ENCODE measurements at regions of chr4 and their contacts with region 1.

Region 1: DNA sequence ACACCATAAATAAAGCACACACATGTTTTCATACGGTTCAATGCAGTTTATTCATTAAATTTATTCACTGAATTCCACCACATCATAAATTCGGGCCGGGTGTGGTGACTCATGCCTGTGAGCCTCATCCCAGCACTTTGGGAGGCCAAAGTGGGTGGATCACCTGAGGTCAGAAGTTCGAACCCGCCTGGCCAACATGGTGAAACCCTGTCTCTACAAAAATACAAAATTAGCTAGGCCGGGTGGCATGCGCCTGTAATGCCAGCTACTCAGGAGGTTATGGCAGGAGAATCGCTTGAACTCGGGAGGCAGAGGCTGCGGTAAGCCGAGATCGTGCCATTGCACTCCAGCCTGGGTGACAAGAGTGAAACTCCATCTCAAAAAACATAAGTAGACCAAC is 131.6 kb downstream of the PDS5A start:
- H3K4me3 Mint-ChIP-seq: no peak overlapping the region
- H3K27ac Mint-ChIP-seq: no peak overlapping the region
- H3K4me1 Mint-ChIP-seq: no peaks in the 10 kb centered on the region
- H3K27me3 Mint-ChIP-seq: no peaks in the 10 kb centered on the region

Region 2: DNA sequence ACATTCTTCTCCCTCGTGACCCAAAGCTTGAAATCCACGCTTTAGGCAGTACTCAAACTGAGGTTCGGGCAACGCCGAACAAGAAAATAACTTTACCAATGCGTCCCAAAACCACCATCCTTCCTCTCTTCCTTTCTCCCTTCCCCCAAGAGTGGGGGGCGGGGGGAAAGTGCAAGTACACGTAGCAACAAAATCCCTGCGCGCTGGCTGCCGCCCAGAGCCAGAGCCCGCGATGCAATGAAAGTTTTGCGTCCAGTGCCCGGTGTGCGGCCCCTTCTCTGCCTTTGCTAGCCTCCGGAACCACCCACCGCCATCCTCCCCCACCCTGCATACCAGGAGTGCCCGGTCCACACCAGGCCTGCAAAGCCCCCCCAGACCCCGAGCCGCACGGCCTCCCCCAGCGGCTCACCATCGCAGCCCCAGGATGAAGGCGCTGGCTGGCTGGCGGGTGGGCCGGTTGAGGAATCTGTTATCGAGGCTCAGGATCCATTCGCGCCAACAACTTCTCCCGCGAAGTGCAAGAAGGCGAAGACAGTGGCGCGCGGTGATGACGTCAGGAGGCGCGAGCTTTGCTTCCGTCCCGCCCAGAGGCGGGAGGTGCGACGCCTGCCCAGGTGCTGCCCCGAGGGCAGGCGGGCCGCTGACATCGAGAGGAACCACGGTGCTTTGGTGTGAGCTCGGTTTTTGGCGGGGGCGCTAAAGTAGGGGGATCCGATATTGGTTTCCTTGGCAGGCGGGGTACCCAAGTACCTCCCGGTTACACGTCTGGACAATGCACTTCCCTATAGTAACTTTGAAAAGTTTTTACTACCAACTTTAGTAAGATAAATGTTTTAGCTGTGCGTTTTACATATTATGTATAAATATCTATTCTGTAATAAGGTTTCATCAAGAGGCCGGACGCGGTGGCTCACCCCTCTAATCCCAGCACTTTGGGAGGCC is 480.0 kb before region 1 on chr4 and contains the start of gene RFC1:
- intact Hi-C with region 1: no loop called
- H3K4me3 Mint-ChIP-seq: peak within 1 kb of the TSS; percentile 95
- H3K27ac Mint-ChIP-seq: peak within 1 kb of the TSS; percentile 96
- H3K4me1 Mint-ChIP-seq: peaks cover 21% of the 10 kb centered on the region
- H3K27me3 Mint-ChIP-seq: no peaks in the 10 kb centered on the region

Region 3: GRCh38 chr4:39597695-39598381 is 248.3 kb before region 1 on chr4:
- intact Hi-C with region 1: no loop called
- H3K4me3 Mint-ChIP-seq: no peak overlapping the region
- H3K27ac Mint-ChIP-seq: peak overlapping the region; percentile 30
- H3K4me1 Mint-ChIP-seq: peaks cover 13% of the 10 kb centered on the region
- H3K27me3 Mint-ChIP-seq: no peaks in the 10 kb centered on the region

Region 4: DNA sequence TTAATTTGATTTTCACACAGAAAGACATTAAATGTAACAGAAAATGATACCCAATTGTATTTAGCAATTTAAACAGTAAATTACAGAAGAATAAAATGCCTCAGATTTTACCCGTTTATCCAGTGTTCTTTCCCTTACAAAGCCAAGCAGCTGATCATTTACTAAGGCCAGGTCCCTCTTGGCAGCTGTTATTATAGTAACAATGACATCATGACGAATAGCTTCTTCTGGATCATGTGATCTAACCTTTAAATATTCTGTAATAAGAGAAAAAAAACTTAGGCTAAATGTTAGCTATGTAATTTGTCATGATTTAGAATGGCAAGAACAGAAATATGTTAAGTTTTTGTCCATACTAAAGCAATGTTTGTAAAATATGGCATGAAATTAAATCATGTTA is 62.2 kb after region 1 on chr4:
- intact Hi-C with region 1: loop called (anchors 10 kb)
- H3K4me3 Mint-ChIP-seq: no peak overlapping the region
- H3K27ac Mint-ChIP-seq: no peak overlapping the region
- H3K4me1 Mint-ChIP-seq: no peaks in the 10 kb centered on the region
- H3K27me3 Mint-ChIP-seq: no peaks in the 10 kb centered on the region